ENCODE measurements at regions of chr3 and their contacts with region 1.

Region 1: DNA sequence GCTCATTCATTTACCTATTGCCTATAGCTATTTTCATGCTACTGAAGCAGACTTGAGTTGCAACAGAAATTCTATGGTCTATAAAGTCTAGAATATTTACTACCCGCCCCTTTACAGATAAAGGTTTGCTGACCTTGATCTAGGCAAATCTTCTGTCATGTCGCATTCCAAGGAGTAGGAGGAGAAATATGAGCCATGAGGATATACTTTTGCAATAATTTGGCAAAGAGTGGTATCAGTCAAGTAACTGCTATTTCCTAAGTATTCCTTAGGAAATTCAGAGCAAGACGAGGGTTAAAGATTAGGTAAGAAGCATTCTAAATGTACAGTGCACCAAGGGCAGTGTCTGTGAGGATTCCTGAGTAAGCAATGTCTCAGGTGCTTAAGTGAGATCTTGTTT is 121.0 kb upstream of the NUDT16 start:
- DNase-seq: no peak
- H3K4me3 ChIP-seq: no peak overlapping the region
- H3K27ac ChIP-seq: no peak overlapping the region
- H3K4me1 ChIP-seq: no peaks in the 10 kb centered on the region
- H3K27me3 ChIP-seq: no peaks in the 10 kb centered on the region
- CTCF ChIP-seq: no peak
- POLR2A ChIP-seq: no peak

Region 2: GRCh38 chr3:131326307-131326706 is 65.8 kb after region 1 on chr3:
- intact Hi-C with region 1: loop called (anchors 2 kb)
- DNase-seq: no peak
- H3K4me3 ChIP-seq: no peak overlapping the region
- H3K27ac ChIP-seq: no peak overlapping the region
- H3K4me1 ChIP-seq: no peaks in the 10 kb centered on the region
- H3K27me3 ChIP-seq: no peaks in the 10 kb centered on the region
- CTCF ChIP-seq: no peak
- POLR2A ChIP-seq: no peak

Measured in breast epithelium (tissue), 4 donors.